SK-N-SH (cell line): ENCODE measurements at regions of chr20 and their contacts with region 1.

Region 1: DNA sequence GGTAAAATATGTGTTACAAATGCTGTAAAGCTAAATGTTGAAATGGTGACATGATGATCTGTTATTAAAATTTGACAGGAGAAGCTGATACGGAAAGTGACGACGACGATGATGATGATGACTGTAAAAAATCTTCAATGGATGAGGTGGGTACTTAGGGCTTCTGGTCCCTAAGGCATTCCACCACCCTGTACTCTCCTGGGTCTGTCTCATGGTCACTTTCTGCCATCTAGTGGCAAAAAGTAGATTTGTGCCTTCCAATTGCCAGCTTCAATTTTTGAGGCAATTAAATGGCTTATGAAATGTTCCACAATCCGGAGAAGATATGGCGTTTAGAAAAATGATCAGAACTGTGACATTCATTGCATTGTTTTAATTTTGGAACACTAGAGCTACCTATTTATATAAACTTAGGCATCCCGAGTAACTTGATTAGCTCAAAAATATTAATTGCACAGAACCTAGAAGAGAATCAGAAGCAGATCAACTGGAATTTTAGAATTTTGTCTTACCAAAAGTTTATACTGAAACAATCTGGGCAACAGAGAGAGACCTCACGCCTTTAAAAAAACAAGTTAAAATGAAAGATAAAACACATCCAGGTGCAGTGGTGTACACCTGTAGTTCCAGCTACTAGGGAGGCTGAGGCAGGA is 346.5 kb upstream of the PLCB4 start:
- DNase-seq: peak; percentile 52
- H3K4me3 ChIP-seq: no peak overlapping the region
- H3K27ac ChIP-seq: no peak overlapping the region
- H3K4me1 ChIP-seq: peaks cover 0 to 9% of the 10 kb centered on the region in 2 experiments; a peak in 1 of 4 replicates
- H3K27me3 ChIP-seq: no peaks in the 10 kb centered on the region
- CTCF ChIP-seq: peak; percentile 86
- EP300 ChIP-seq: no peak
- RAD21 ChIP-seq: peak; percentile 96

Region 2: DNA sequence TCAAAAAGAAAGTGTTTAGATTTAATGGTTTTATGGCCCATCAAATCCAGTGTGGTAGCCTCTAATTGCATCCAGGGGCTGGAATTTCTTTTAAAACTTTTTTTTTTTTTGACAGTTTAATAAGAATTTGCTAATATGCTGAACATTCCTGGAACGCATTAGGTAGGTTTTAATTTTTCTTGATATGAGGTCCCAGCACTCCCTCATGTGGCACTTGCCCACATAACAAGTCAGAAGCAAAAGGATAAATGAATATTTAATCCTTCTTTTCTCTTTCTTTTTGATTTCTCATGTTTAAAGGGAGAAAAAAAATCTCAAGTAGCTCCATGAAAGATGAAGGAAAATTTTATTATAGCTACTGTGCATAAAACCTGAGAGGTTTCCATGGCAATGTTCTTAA is 795.6 kb before region 1 on chr20:
- CTCF ChIA-PET with region 1: interaction called, 20 read pairs
- POLR2A ChIA-PET with region 1: no interaction called
- DNase-seq: peak; percentile 10
- H3K4me3 ChIP-seq: no peak overlapping the region
- H3K27ac ChIP-seq: no peak overlapping the region
- H3K4me1 ChIP-seq: peaks cover 0 to 11% of the 10 kb centered on the region in 2 experiments; a peak in 1 of 4 replicates
- H3K27me3 ChIP-seq: 0 out of 2 replicates have a peak, but pooled peaks cover 9% of the 10 kb centered on the region
- CTCF ChIP-seq: peak; percentile 80
- EP300 ChIP-seq: no peak
- RAD21 ChIP-seq: peak; percentile 72

Region 3: GRCh38 chr20:7989379-7989778 is 733.0 kb before region 1 on chr20:
- CTCF ChIA-PET with region 1: interaction called, 45 read pairs
- POLR2A ChIA-PET with region 1: no interaction called
- DNase-seq: no peak
- H3K4me3 ChIP-seq: no peak overlapping the region
- H3K27ac ChIP-seq: no peak overlapping the region
- H3K4me1 ChIP-seq: no peaks in the 10 kb centered on the region; a peak in 1 of 4 replicates
- H3K27me3 ChIP-seq: no peaks in the 10 kb centered on the region
- CTCF ChIP-seq: peak; percentile 29
- EP300 ChIP-seq: no peak
- RAD21 ChIP-seq: peak; percentile 33; the same call in 1 of the 2 replicates

Region 4: DNA sequence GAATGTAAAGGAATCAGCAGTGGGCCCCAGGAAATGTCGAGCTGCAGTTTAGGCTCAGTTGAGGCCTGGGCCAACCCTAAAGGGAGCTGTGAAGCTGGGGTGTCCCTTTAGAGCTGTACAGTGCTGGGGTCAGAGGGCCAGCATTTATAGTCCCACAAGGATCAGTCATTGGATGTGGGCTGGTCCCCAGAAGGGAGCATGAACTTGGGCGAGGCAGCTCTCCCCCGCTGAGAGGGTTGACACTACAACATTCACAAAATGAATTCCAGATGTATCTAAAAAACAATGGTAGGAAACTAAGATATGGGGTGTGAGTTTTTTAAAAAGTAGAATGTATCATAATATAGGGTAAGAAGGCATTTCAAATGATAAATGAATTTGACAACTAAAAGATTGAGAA is 673.1 kb before region 1 on chr20:
- CTCF ChIA-PET with region 1: interaction called, 155 read pairs
- POLR2A ChIA-PET with region 1: no interaction called
- DNase-seq: no peak
- H3K4me3 ChIP-seq: no peak overlapping the region
- H3K27ac ChIP-seq: no peak overlapping the region
- H3K4me1 ChIP-seq: peaks cover 0 to 6% of the 10 kb centered on the region in 2 experiments; a peak in 2 of 4 replicates
- H3K27me3 ChIP-seq: no peaks in the 10 kb centered on the region
- CTCF ChIP-seq: no peak
- EP300 ChIP-seq: no peak
- RAD21 ChIP-seq: no peak

Region 5: DNA sequence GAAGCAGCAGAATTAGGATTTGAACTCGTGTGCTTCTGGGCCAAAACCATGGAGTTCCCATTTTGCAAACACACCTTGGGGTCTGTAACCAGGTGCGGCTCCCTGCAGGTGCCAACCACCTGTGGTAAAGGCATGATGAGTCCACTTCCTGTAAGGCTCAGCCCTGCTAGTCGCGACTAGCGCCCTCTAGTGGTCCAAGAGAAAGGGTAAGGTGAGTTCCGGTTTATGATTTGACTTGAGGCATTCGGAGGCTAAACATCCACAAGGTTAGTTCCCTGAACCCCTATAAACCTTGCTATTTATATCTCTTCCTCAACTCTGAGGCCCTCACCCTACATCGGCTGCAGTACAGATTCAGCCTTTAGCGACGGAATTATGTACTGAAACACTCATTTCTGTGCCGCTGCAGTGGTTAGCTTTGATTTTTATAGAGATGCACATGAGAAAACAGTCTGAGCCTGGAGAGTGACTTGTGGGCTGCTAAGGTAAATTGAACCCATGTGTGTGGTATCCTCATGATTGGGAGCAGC is 416.9 kb before region 1 on chr20:
- CTCF ChIA-PET with region 1: interaction called, 15 read pairs
- POLR2A ChIA-PET with region 1: no interaction called
- DNase-seq: peak; percentile 25
- H3K4me3 ChIP-seq: no peak overlapping the region; a peak in 1 of 4 replicates
- H3K27ac ChIP-seq: peak overlapping the region in 1 of 2 experiments; percentile 73; a peak in 2 of 4 replicates
- H3K4me1 ChIP-seq: peaks cover 0 to 24% of the 10 kb centered on the region in 2 experiments; a peak in 3 of 4 replicates
- H3K27me3 ChIP-seq: no peaks in the 10 kb centered on the region
- CTCF ChIP-seq: peak; percentile 72
- EP300 ChIP-seq: peak in 1 of 2 experiments; percentile 43; a peak in 1 of 4 replicates
- RAD21 ChIP-seq: peak; percentile 44

Region 6: GRCh38 chr20:8515810-8516435 is 206.5 kb before region 1 on chr20:
- CTCF ChIA-PET with region 1: interaction called, 16 read pairs
- POLR2A ChIA-PET with region 1: no interaction called
- DNase-seq: no peak
- H3K4me3 ChIP-seq: no peak overlapping the region
- H3K27ac ChIP-seq: no peak overlapping the region
- H3K4me1 ChIP-seq: peaks cover 0 to 3% of the 10 kb centered on the region in 2 experiments; a peak in 1 of 4 replicates
- H3K27me3 ChIP-seq: no peaks in the 10 kb centered on the region
- CTCF ChIP-seq: no peak
- EP300 ChIP-seq: no peak
- RAD21 ChIP-seq: no peak

Region 7: GRCh38 chr20:8670893-8671215 is 51.5 kb before region 1 on chr20:
- CTCF ChIA-PET with region 1: interaction called, 40 read pairs
- POLR2A ChIA-PET with region 1: no interaction called
- DNase-seq: peak; percentile 49
- H3K4me3 ChIP-seq: no peak overlapping the region
- H3K27ac ChIP-seq: peak overlapping the region in 1 of 2 experiments; percentile 86; a peak in 2 of 4 replicates
- H3K4me1 ChIP-seq: peaks cover 0 to 23% of the 10 kb centered on the region in 2 experiments; a peak in 2 of 4 replicates
- H3K27me3 ChIP-seq: no peaks in the 10 kb centered on the region
- CTCF ChIP-seq: no peak
- EP300 ChIP-seq: peak in 1 of 2 experiments; percentile 97; a peak in 2 of 4 replicates
- RAD21 ChIP-seq: no peak; the same call in 1 of the 2 replicates

Region 8: DNA sequence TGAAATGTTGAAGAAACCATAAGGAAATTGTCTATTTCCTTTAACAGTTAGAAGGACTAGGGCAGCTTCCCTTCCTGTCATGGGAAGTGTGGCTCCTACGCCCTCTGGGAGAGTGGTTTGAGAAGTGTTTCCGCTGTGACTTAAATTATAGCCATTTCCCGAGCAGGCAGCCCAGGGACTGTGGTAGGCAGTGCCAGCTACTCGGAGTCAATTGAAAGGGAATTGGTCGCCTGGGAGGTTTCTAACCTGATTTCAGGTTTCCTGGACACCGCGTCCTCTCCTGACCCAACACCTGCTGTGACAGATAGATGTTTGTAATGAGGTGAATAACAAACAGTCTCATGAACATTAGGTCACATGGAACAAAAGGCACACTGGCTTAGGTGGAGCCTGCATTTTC is 90.4 kb after region 1 on chr20:
- CTCF ChIA-PET with region 1: no interaction called
- POLR2A ChIA-PET with region 1: no interaction called
- DNase-seq: no peak
- H3K4me3 ChIP-seq: no peak overlapping the region
- H3K27ac ChIP-seq: no peak overlapping the region
- H3K4me1 ChIP-seq: peaks cover 0 to 4% of the 10 kb centered on the region in 2 experiments; a peak in 2 of 4 replicates
- H3K27me3 ChIP-seq: no peaks in the 10 kb centered on the region
- CTCF ChIP-seq: no peak
- EP300 ChIP-seq: no peak
- RAD21 ChIP-seq: no peak

Region 9: GRCh38 chr20:8837396-8837795 is 115.0 kb after region 1 on chr20:
- CTCF ChIA-PET with region 1: no interaction called
- POLR2A ChIA-PET with region 1: no interaction called
- DNase-seq: no peak
- H3K4me3 ChIP-seq: no peak overlapping the region
- H3K27ac ChIP-seq: no peak overlapping the region
- H3K4me1 ChIP-seq: no peaks in the 10 kb centered on the region
- H3K27me3 ChIP-seq: no peaks in the 10 kb centered on the region
- CTCF ChIP-seq: no peak
- EP300 ChIP-seq: no peak
- RAD21 ChIP-seq: no peak